Activated naive CD4-positive, alpha-beta T cell treated with anti-CD3 and anti-CD28 coated beads for 36 hours (primary cell): ENCODE measurements at regions of chr17 and their contacts with region 1.

Region 1: GRCh38 chr17:66364990-66365490 is 62.6 kb downstream of the PRKCA start:
- DNase-seq: no peak
- H3K4me3 Mint-ChIP-seq: peak overlapping the region; percentile 44
- H3K27ac Mint-ChIP-seq: peak overlapping the region; percentile 66
- H3K4me1 Mint-ChIP-seq: peaks cover 86% of the 10 kb centered on the region
- H3K27me3 Mint-ChIP-seq: no peaks in the 10 kb centered on the region

Region 2: GRCh38 chr17:66348584-66349165 is 16.4 kb before region 1 on chr17:
- CTCF ChIA-PET with region 1: no interaction called
- intact Hi-C with region 1: loop called (anchors 2 kb)
- DNase-seq: peak; percentile 62
- H3K4me3 Mint-ChIP-seq: no peak overlapping the region
- H3K27ac Mint-ChIP-seq: peak overlapping the region; percentile 47
- H3K4me1 Mint-ChIP-seq: peaks cover 73% of the 10 kb centered on the region
- H3K27me3 Mint-ChIP-seq: no peaks in the 10 kb centered on the region

Region 3: GRCh38 chr17:66441101-66441661 is 76.1 kb after region 1 on chr17:
- CTCF ChIA-PET with region 1: no interaction called
- intact Hi-C with region 1: no loop called
- DNase-seq: no peak
- H3K4me3 Mint-ChIP-seq: no peak overlapping the region
- H3K27ac Mint-ChIP-seq: peak overlapping the region; percentile 48
- H3K4me1 Mint-ChIP-seq: peaks cover 62% of the 10 kb centered on the region
- H3K27me3 Mint-ChIP-seq: no peaks in the 10 kb centered on the region